ENCODE measurements at regions of chrX and their contacts with region 1.

Region 1: DNA sequence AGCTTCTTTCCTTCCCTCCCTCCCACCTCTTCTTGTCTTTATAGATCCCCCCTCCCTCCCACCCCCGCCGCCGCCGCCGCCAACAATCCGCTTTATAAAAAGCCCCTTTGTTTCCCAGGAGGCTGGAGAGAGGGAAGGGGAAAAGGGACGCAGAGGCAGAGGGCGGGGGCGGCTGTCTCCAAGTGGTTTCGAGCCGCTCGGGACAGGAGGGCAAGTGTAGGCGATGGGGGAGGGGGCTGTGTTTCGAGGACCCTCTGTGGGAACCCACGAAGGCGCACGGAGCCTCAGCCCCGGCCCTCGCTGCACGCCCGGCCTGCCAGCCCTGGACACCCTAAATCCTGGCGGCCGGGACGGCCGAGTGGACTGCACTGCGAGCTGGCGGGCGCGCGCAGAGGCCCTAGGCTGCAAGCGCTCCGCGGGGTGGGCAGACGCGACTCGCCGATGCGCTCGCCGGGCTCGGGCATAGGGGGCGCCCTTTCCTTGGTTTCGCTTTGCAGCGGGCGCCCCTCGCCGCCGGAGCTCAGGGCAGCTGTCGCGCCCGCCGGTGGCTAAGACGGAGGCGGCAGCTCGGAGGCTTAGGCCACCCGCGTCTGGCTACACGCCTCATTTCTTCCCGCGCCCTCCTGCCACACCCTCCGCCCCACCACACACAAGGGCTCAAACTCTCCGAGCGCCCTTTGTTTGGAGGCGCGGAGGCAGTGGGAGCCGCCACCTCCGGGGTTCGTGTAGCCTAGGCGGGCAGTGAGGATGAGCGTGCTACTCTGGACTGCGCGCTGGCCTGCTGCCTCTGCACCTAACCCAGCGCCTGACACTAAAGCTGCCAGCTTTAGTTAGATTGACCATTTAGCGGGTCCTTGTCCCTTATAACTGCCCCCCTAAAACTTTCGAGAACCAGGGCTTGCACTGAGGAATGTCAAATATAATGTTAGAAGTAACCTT is 2.2 kb downstream of the MAMLD1 start:
- DNase-seq: peak; percentile 62
- H3K4me3 Mint-ChIP-seq: peak overlapping the region; percentile 76
- H3K27ac Mint-ChIP-seq: peak overlapping the region; percentile 84
- H3K4me1 Mint-ChIP-seq: peaks cover 23% of the 10 kb centered on the region
- H3K27me3 Mint-ChIP-seq: peaks cover 15% of the 10 kb centered on the region

Region 2: GRCh38 chrX:149504915-149505651 is 860.2 kb before region 1 on chrX and contains the start of gene IDS:
- intact Hi-C with region 1: loop called (anchors 10 kb)
- DNase-seq: peak; percentile 85
- H3K4me3 Mint-ChIP-seq: peak within 1 kb of the TSS; percentile 94
- H3K27ac Mint-ChIP-seq: peak within 1 kb of the TSS; percentile 95
- H3K4me1 Mint-ChIP-seq: peaks cover 31% of the 10 kb centered on the region
- H3K27me3 Mint-ChIP-seq: no peaks in the 10 kb centered on the region
- total RNA-seq, gene IDS: 40.4 and 43.7 TPM in 2 replicates

Region 3: GRCh38 chrX:150200820-150201287 is 164.5 kb before region 1 on chrX:
- intact Hi-C with region 1: loop called (anchors 5 kb)
- DNase-seq: peak; percentile 28
- H3K4me3 Mint-ChIP-seq: no peak overlapping the region
- H3K27ac Mint-ChIP-seq: no peak overlapping the region
- H3K4me1 Mint-ChIP-seq: peaks cover 8% of the 10 kb centered on the region
- H3K27me3 Mint-ChIP-seq: no peaks in the 10 kb centered on the region

Region 4: DNA sequence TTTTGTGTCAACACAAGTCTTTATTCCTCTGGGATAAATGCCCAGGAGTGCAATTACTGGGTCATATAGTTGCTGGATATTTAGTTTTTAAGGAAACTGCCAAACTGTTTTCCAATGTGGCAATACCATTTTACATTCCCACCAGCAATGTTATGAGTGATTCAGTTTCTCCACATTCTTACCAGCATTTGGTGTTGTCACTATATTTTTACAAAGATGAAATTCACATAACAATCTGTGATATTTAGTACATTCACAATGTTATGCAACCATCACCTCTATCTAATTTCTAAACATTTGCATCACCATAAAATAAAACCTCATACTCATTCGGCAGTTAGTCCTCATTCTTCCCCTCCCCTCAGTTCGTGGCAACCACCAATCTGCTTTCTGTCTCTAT is 72.8 kb after region 1 on chrX:
- intact Hi-C with region 1: loop called (anchors 2 kb)
- DNase-seq: no peak
- H3K4me3 Mint-ChIP-seq: no peak overlapping the region
- H3K27ac Mint-ChIP-seq: no peak overlapping the region
- H3K4me1 Mint-ChIP-seq: peaks cover 11% of the 10 kb centered on the region
- H3K27me3 Mint-ChIP-seq: no peaks in the 10 kb centered on the region

Region 5: GRCh38 chrX:150693775-150694574 is 328.7 kb after region 1 on chrX:
- intact Hi-C with region 1: loop called (anchors 5 kb)
- DNase-seq: peak; percentile 63
- H3K4me3 Mint-ChIP-seq: peak overlapping the region; percentile 84
- H3K27ac Mint-ChIP-seq: peak overlapping the region; percentile 92
- H3K4me1 Mint-ChIP-seq: peaks cover 52% of the 10 kb centered on the region
- H3K27me3 Mint-ChIP-seq: no peaks in the 10 kb centered on the region

Measured in activated T-helper 2 cell treated with anti-CD3 and anti-CD28 coated beads, Interferon-gamma antibody, Interleukin-2, Interleukin-4, amounts not matched to agents 10 μg/mL and 5 μg/mL and 100 μg/mL, durations not matched to agents 14 hours and 24 hours and 36 hours (primary cell).